GM12878 (cell line): ENCODE measurements at regions of chr10 and their contacts with region 1.

Region 1: GRCh38 chr10:12264204-12264940 is 68.4 kb downstream of the CDC123 start:
- DNase-seq: peak; percentile 99
- ATAC-seq: peak; percentile 85
- H3K4me3 ChIP-seq: peak overlapping the region; percentile 23; the same call in 1 of the 2 replicates
- H3K27ac ChIP-seq: peak overlapping the region; percentile 52
- H3K4me1 ChIP-seq: peaks cover 25% of the 10 kb centered on the region
- H3K27me3 ChIP-seq: no peaks in the 10 kb centered on the region
- CTCF ChIP-seq: peak; percentile 68 to 92 (median 74)
- EP300 ChIP-seq: peak; percentile 64 to 70; a peak in 3 of 4 replicates
- POLR2A ChIP-seq: peak; percentile 46
- RAD21 ChIP-seq: peak; percentile 78

Region 2: DNA sequence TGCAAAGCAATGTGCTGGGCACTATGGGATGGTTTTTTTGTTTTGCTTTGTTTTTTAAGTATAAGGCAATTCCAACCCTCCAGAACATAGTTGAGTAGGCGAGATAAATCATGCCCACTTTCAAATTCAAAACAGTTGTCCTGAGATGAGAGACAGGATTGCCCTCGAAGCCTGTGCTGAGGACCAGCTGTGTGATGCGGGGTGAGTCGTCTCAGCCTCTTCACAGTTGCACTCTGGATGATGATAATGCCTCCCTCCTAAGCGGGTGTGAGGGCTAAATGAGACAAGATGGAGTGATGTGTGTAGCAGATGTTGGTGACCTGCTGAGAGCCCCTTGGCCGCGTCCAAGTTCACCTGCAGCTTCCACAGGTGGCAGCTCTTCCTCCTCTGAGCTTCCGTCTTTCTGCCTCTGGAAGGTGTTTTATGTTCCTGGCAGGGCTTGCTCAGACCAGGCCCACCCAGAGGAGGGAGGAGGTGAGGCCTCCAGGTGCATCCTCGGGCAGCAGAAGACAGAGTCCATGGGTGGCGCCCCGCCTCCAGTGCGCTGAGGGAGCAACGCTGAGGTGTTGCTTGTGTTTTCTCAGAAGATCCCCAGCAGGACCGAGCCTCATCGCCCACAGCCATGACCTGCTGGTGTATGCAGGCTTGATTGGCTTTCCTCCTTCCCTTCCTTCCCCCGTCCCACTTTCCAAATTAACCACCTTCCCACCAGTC is 491.6 kb before region 1 on chr10:
- CTCF ChIA-PET with region 1: no interaction called
- POLR2A ChIA-PET with region 1: no interaction called
- RAD21 ChIA-PET with region 1: no interaction called
- SMC1A ChIA-PET with region 1: no interaction called
- in situ Hi-C with region 1: no loop called
- intact Hi-C with region 1: no loop called
- DNase-seq: no peak
- ATAC-seq: no peak
- H3K4me3 ChIP-seq: no peak overlapping the region
- H3K27ac ChIP-seq: no peak overlapping the region
- H3K4me1 ChIP-seq: no peaks in the 10 kb centered on the region
- H3K27me3 ChIP-seq: no peaks in the 10 kb centered on the region; a peak in 1 of 4 replicates
- CTCF ChIP-seq: no peak
- EP300 ChIP-seq: no peak
- POLR2A ChIP-seq: no peak
- RAD21 ChIP-seq: no peak

Region 3: DNA sequence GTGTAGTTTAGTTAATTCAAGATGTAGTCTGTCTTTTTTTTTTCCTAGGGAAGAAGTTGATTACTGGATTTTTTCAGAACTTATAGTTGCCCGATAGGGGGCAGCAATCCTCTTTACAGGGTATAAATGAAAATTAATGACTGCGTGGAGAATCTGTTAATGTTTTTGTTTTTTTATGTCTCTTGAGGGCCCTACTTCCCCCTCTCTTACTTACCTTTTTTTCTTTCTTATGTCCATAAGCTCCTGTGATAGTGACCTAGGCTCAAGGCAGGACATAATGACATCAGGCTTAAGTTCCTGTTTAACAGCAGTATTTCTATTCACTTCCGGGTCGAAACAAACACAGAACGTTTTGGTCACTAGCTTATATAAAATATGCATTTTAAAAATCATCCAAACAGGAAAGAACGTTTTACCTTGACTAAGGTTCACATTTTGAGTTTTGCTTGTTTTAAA is 49.6 kb before region 1 on chr10:
- CTCF ChIA-PET with region 1: interaction called, 35 read pairs
- POLR2A ChIA-PET with region 1: no interaction called
- RAD21 ChIA-PET with region 1: interaction called, 17 read pairs
- SMC1A ChIA-PET with region 1: interaction called, 25 read pairs
- in situ Hi-C with region 1: no loop called
- intact Hi-C with region 1: no loop called
- DNase-seq: no peak
- ATAC-seq: peak; percentile 54; the same call in 2 of the 3 replicates
- H3K4me3 ChIP-seq: no peak overlapping the region
- H3K27ac ChIP-seq: no peak overlapping the region
- H3K4me1 ChIP-seq: no peaks in the 10 kb centered on the region
- H3K27me3 ChIP-seq: no peaks in the 10 kb centered on the region
- CTCF ChIP-seq: peak; percentile 54 to 65 (median 59)
- EP300 ChIP-seq: no peak
- POLR2A ChIP-seq: no peak
- RAD21 ChIP-seq: peak; percentile 68

Region 4: GRCh38 chr10:12279281-12279680 is 14.9 kb after region 1 on chr10:
- CTCF ChIA-PET with region 1: interaction called, 5 read pairs
- POLR2A ChIA-PET with region 1: interaction called, 5 read pairs
- RAD21 ChIA-PET with region 1: interaction called, 12 read pairs
- SMC1A ChIA-PET with region 1: interaction called, 8 read pairs
- in situ Hi-C with region 1: no loop called
- intact Hi-C with region 1: no loop called
- DNase-seq: no peak
- ATAC-seq: no peak
- H3K4me3 ChIP-seq: no peak overlapping the region
- H3K27ac ChIP-seq: no peak overlapping the region
- H3K4me1 ChIP-seq: peaks cover 3% of the 10 kb centered on the region; the same call in 1 of the 2 replicates
- H3K27me3 ChIP-seq: no peaks in the 10 kb centered on the region
- CTCF ChIP-seq: no peak
- EP300 ChIP-seq: no peak
- POLR2A ChIP-seq: no peak
- RAD21 ChIP-seq: no peak

Region 5: GRCh38 chr10:12333380-12334185 is 69.2 kb after region 1 on chr10:
- CTCF ChIA-PET with region 1: interaction called, 4 read pairs
- POLR2A ChIA-PET with region 1: interaction called, 3 read pairs
- RAD21 ChIA-PET with region 1: interaction called, 18 read pairs
- SMC1A ChIA-PET with region 1: interaction called, 20 read pairs
- in situ Hi-C with region 1: no loop called
- intact Hi-C with region 1: loop called (anchors 1 kb)
- DNase-seq: no peak
- ATAC-seq: peak; percentile 94
- H3K4me3 ChIP-seq: peak overlapping the region; percentile 34; the same call in 1 of the 2 replicates
- H3K27ac ChIP-seq: peak overlapping the region; percentile 27
- H3K4me1 ChIP-seq: peaks cover 22% of the 10 kb centered on the region
- H3K27me3 ChIP-seq: no peaks in the 10 kb centered on the region
- CTCF ChIP-seq: no peak
- EP300 ChIP-seq: peak; percentile 27 to 52; a peak in 2 of 4 replicates
- POLR2A ChIP-seq: no peak
- RAD21 ChIP-seq: no peak

Region 6: DNA sequence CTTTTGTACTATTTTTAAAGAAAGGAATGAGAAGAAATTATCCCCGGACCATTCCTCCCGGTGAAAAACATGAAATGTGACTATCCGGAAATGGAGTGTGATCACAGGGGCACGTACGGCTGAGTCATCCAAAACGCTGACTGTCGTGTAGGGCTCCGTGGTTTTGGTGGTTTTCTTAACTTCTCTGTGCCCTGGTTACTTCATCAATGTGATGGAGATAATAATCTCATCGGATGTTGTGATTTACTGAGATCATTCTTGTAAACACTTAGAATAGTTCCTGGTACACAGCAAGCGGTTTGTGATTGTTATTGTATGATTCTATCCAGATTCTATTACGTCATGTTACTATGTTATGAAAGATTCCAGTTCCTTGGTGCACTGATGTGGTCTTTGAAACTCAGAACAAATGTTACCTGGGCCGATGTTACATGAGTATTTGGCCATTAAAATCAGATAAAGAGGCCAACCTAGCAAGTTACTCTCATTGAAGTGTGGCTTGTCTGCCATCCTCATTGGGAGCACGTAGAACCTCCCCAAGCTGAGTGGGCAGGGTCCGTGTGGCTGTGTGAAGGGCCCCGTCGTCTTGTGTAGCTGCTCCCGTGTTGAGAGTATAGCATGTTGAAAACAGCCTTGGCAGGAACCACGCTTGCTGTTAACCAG is 184.5 kb after region 1 on chr10:
- CTCF ChIA-PET with region 1: no interaction called
- POLR2A ChIA-PET with region 1: no interaction called
- RAD21 ChIA-PET with region 1: interaction called, 10 read pairs
- SMC1A ChIA-PET with region 1: no interaction called
- in situ Hi-C with region 1: no loop called
- intact Hi-C with region 1: no loop called
- DNase-seq: peak; percentile 59
- ATAC-seq: peak; percentile 98
- H3K4me3 ChIP-seq: no peak overlapping the region
- H3K27ac ChIP-seq: no peak overlapping the region; the same call in 1 of the 2 replicates
- H3K4me1 ChIP-seq: peaks cover 10% of the 10 kb centered on the region
- H3K27me3 ChIP-seq: no peaks in the 10 kb centered on the region
- CTCF ChIP-seq: no peak
- EP300 ChIP-seq: peak; percentile 57 to 73; a peak in 2 of 4 replicates
- POLR2A ChIP-seq: 0 out of 2 replicates have a peak, but pooled peaks have one; percentile 44
- RAD21 ChIP-seq: no peak

Region 7: DNA sequence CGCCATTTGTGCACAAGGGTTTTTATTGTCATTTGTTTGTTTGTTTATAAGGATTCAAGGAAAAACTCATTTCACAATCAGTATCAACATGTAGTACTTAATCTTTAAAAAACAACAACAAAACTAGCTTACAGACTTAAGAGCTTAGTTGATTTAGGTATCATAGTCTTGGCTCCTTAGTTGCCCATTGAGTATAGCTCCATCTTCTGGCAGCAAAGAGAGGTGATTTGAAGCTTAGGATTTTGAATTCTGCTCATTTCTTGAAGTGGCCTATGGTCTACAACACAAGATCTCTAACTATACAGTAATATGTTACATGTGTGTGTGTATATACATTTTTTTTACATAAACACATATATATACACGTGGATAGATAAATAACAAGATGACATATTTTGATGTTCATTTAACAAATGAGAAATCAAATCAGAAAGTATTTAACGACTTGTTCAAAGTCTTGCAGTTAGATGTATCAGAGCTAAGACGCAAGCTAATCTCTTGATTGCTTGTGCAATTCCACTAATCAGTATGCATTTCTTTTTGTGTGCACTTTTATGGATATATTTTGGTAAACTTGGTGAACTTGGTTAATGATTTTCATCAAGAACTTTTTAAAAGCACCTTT is 392.3 kb after region 1 on chr10:
- CTCF ChIA-PET with region 1: interaction called, 116 read pairs
- POLR2A ChIA-PET with region 1: no interaction called
- RAD21 ChIA-PET with region 1: interaction called, 105 read pairs
- SMC1A ChIA-PET with region 1: interaction called, 104 read pairs
- in situ Hi-C with region 1: loop called (anchors 5 kb)
- intact Hi-C with region 1: loop called (anchors 1 kb)
- DNase-seq: no peak
- ATAC-seq: peak; percentile 89
- H3K4me3 ChIP-seq: no peak overlapping the region
- H3K27ac ChIP-seq: no peak overlapping the region
- H3K4me1 ChIP-seq: peaks cover 5% of the 10 kb centered on the region
- H3K27me3 ChIP-seq: no peaks in the 10 kb centered on the region
- CTCF ChIP-seq: peak; percentile 65 to 76 (median 66)
- EP300 ChIP-seq: no peak
- POLR2A ChIP-seq: no peak
- RAD21 ChIP-seq: peak; percentile 85

Region 8: GRCh38 chr10:12902135-12902572 is 637.8 kb after region 1 on chr10:
- CTCF ChIA-PET with region 1: interaction called, 10 read pairs
- POLR2A ChIA-PET with region 1: no interaction called
- RAD21 ChIA-PET with region 1: no interaction called
- SMC1A ChIA-PET with region 1: no interaction called
- in situ Hi-C with region 1: no loop called
- intact Hi-C with region 1: no loop called
- DNase-seq: peak; percentile 4
- ATAC-seq: peak; percentile 76
- H3K4me3 ChIP-seq: no peak overlapping the region
- H3K27ac ChIP-seq: no peak overlapping the region
- H3K4me1 ChIP-seq: no peaks in the 10 kb centered on the region
- H3K27me3 ChIP-seq: 0 out of 4 replicates have a peak, but pooled peaks cover 0 to 1% of the 10 kb centered on the region in 2 experiments
- CTCF ChIP-seq: peak; percentile 68 to 76 (median 72)
- EP300 ChIP-seq: no peak
- POLR2A ChIP-seq: no peak
- RAD21 ChIP-seq: peak; percentile 83